ENCODE measurements at regions of chr2 and their contacts with region 1.

Region 1: GRCh38 chr2:20728114-20728758 is 61.3 kb downstream of the GDF7 start:
- DNase-seq: peak; percentile 93 to 94
- H3K4me3 ChIP-seq: no peak overlapping the region
- H3K4me3 Mint-ChIP-seq: peak overlapping the region; percentile 63
- H3K27ac Mint-ChIP-seq: peak overlapping the region; percentile 88
- H3K4me1 ChIP-seq: peaks cover 41% of the 10 kb centered on the region
- H3K4me1 Mint-ChIP-seq: peaks cover 18% of the 10 kb centered on the region
- H3K27me3 ChIP-seq: no peaks in the 10 kb centered on the region
- H3K27me3 Mint-ChIP-seq: no peaks in the 10 kb centered on the region
- CTCF ChIP-seq: no peak

Region 2: GRCh38 chr2:19879120-19879519 is 849.1 kb before region 1 on chr2:
- CTCF ChIA-PET with region 1: no interaction called
- POLR2A ChIA-PET with region 1: no interaction called
- intact Hi-C with region 1: no loop called
- DNase-seq: no peak
- H3K4me3 ChIP-seq: no peak overlapping the region
- H3K4me3 Mint-ChIP-seq: no peak overlapping the region
- H3K27ac Mint-ChIP-seq: no peak overlapping the region
- H3K4me1 ChIP-seq: no peaks in the 10 kb centered on the region
- H3K4me1 Mint-ChIP-seq: no peaks in the 10 kb centered on the region
- H3K27me3 ChIP-seq: no peaks in the 10 kb centered on the region; the same call in 1 of the 2 replicates
- H3K27me3 Mint-ChIP-seq: no peaks in the 10 kb centered on the region
- CTCF ChIP-seq: no peak

Region 3: DNA sequence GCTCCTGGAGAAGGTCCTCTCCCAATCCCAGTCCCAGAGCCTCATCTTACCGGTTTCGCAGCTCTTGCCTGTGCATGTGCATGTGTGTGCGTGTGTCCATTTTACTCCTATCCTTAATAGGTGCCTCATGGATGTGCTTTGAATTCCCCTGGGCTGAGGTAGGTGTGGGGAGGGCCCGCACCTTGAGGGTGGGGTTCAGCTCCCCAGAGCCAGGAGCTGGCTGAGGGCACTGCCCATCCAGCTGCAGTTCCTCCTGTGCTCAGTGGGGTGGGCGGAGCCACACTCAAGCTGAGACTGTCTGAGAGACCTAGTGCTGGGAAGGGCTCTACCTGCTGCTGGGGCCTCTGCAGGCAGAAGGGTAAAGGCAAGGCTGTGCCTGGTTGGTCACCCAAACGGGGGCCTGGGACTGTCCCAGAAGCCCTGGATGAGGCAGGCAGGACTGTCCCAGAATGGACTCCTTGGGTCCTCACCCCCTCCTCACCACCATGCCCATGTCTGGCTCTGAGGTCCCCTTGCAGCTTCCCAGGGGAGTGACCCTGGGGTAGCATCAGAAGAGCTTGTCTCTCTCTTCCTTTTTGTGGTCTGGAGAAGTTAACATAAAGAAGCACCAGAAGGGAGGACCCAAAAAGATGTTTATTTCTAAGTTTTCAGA is 52.4 kb before region 1 on chr2:
- CTCF ChIA-PET with region 1: interaction called, 6 read pairs
- POLR2A ChIA-PET with region 1: interaction called, 5 read pairs
- intact Hi-C with region 1: loop called (anchors 1 kb)
- DNase-seq: peak; percentile 79 to 80
- H3K4me3 ChIP-seq: no peak overlapping the region
- H3K4me3 Mint-ChIP-seq: peak overlapping the region; percentile 42
- H3K27ac Mint-ChIP-seq: peak overlapping the region; percentile 69
- H3K4me1 ChIP-seq: peaks cover 15% of the 10 kb centered on the region
- H3K4me1 Mint-ChIP-seq: peaks cover 25% of the 10 kb centered on the region
- H3K27me3 ChIP-seq: no peaks in the 10 kb centered on the region
- H3K27me3 Mint-ChIP-seq: no peaks in the 10 kb centered on the region
- CTCF ChIP-seq: peak in 1 of 2 experiments; percentile 32

Region 4: GRCh38 chr2:20682167-20682920 is 45.9 kb before region 1 on chr2:
- CTCF ChIA-PET with region 1: no interaction called
- POLR2A ChIA-PET with region 1: no interaction called
- intact Hi-C with region 1: loop called (anchors 1 kb)
- DNase-seq: peak in 1 of 2 experiments; percentile 58
- H3K4me3 ChIP-seq: no peak overlapping the region
- H3K4me3 Mint-ChIP-seq: no peak overlapping the region
- H3K27ac Mint-ChIP-seq: no peak overlapping the region
- H3K4me1 ChIP-seq: no peaks in the 10 kb centered on the region
- H3K4me1 Mint-ChIP-seq: no peaks in the 10 kb centered on the region
- H3K27me3 ChIP-seq: no peaks in the 10 kb centered on the region
- H3K27me3 Mint-ChIP-seq: no peaks in the 10 kb centered on the region
- CTCF ChIP-seq: peak; percentile 53 to 82

Region 5: GRCh38 chr2:20744366-20745335 is 16.4 kb after region 1 on chr2:
- CTCF ChIA-PET with region 1: interaction called, 5 read pairs
- POLR2A ChIA-PET with region 1: interaction called, 6 read pairs
- intact Hi-C with region 1: loop called (anchors 1 kb)
- DNase-seq: no peak
- H3K4me3 ChIP-seq: no peak overlapping the region
- H3K4me3 Mint-ChIP-seq: no peak overlapping the region
- H3K27ac Mint-ChIP-seq: no peak overlapping the region
- H3K4me1 ChIP-seq: peaks cover 34% of the 10 kb centered on the region
- H3K4me1 Mint-ChIP-seq: peaks cover 37% of the 10 kb centered on the region
- H3K27me3 ChIP-seq: no peaks in the 10 kb centered on the region
- H3K27me3 Mint-ChIP-seq: no peaks in the 10 kb centered on the region
- CTCF ChIP-seq: no peak

Region 6: DNA sequence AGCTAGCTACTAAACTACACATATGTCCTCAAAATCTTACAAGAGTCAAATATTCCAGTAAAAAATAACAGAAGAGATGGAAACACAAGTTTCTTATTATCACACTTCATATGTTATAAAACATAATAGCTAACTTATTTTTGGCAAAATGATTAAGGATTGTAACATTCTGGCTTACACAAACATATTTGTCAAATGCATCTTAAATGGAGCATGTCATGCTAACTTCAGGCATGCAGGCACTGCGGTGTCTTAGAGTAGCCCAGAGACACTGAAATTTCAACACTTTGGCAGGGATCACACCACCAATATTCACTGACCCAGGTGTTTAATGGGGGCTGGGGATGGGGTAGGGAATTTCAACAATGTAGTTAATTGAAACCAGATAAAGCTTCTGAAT is 43.1 kb after region 1 on chr2:
- CTCF ChIA-PET with region 1: no interaction called
- POLR2A ChIA-PET with region 1: no interaction called
- intact Hi-C with region 1: loop called (anchors 1 kb)
- DNase-seq: no peak
- H3K4me3 ChIP-seq: no peak overlapping the region
- H3K4me3 Mint-ChIP-seq: no peak overlapping the region
- H3K27ac Mint-ChIP-seq: no peak overlapping the region
- H3K4me1 ChIP-seq: peaks cover 23% of the 10 kb centered on the region
- H3K4me1 Mint-ChIP-seq: peaks cover 29% of the 10 kb centered on the region
- H3K27me3 ChIP-seq: no peaks in the 10 kb centered on the region
- H3K27me3 Mint-ChIP-seq: no peaks in the 10 kb centered on the region
- CTCF ChIP-seq: no peak

Region 7: GRCh38 chr2:20812779-20813178 is 84.5 kb after region 1 on chr2:
- CTCF ChIA-PET with region 1: no interaction called
- POLR2A ChIA-PET with region 1: no interaction called
- intact Hi-C with region 1: no loop called
- DNase-seq: no peak
- H3K4me3 ChIP-seq: no peak overlapping the region
- H3K4me3 Mint-ChIP-seq: no peak overlapping the region
- H3K27ac Mint-ChIP-seq: no peak overlapping the region
- H3K4me1 ChIP-seq: no peaks in the 10 kb centered on the region
- H3K4me1 Mint-ChIP-seq: no peaks in the 10 kb centered on the region
- H3K27me3 ChIP-seq: no peaks in the 10 kb centered on the region
- H3K27me3 Mint-ChIP-seq: no peaks in the 10 kb centered on the region
- CTCF ChIP-seq: no peak

Region 8: DNA sequence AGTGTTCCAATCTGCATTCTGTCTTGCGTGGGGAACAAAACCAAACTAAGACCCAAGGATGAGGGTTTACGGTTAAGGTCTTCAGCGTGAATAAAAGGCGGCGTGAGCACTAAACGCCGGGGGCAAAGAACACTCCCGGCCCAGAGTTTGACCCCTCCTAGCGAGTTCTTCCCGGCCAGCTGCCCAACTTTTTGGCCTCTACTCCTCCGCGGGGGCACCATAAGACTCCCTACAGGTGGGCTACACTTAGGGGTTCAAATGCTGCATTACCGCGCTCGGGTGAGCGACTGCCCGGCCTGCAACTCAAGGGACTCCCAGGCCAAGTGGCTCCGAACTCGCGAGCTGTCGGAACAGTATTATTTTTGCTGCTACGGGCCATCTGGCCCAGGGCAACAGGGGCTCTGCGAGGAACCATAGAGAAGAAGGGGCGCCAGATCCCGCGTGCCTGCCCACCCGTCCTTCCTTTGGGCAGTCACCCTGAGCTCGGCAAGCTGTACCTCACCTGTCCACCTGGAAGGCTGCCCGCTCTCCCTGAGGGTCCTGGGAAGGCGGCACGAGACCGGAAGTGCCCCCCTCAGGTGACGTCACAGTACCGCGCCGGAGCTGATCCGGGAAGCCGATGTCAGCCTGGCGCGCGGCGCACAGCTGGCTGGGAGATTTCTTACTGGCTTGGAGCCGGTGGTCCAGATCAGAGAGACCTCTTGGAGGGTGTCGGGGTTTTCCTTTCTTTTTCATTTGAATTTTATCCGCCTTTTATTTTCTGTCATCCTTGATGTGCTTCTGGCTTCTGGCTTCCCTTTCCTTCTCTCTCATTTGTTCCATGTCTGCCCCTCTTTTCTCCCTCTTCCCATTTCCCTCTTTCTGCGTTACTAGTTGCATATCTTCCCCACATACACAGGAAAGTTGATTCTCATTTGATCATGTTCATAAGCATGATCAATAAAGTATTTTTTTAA is 94.6 kb after region 1 on chr2 and contains the start of gene LDAH:
- CTCF ChIA-PET with region 1: no interaction called
- POLR2A ChIA-PET with region 1: no interaction called
- intact Hi-C with region 1: loop called (anchors 1 kb)
- DNase-seq: peak; percentile 94 to 95
- H3K4me3 ChIP-seq: peak within 1 kb of the TSS; percentile 83
- H3K4me3 Mint-ChIP-seq: peak within 1 kb of the TSS; percentile 98
- H3K27ac Mint-ChIP-seq: peak within 1 kb of the TSS; percentile 99
- H3K4me1 ChIP-seq: peaks cover 13% of the 10 kb centered on the region
- H3K4me1 Mint-ChIP-seq: peaks cover 5% of the 10 kb centered on the region
- H3K27me3 ChIP-seq: no peaks in the 10 kb centered on the region
- H3K27me3 Mint-ChIP-seq: no peaks in the 10 kb centered on the region
- CTCF ChIP-seq: no peak
- total RNA-seq, gene LDAH: 37.2 and 40.5 TPM in 2 replicates

Region 9: GRCh38 chr2:20897047-20897446 is 168.8 kb after region 1 on chr2:
- CTCF ChIA-PET with region 1: no interaction called
- POLR2A ChIA-PET with region 1: no interaction called
- intact Hi-C with region 1: no loop called
- DNase-seq: no peak
- H3K4me3 ChIP-seq: no peak overlapping the region
- H3K4me3 Mint-ChIP-seq: no peak overlapping the region
- H3K27ac Mint-ChIP-seq: no peak overlapping the region
- H3K4me1 ChIP-seq: no peaks in the 10 kb centered on the region
- H3K4me1 Mint-ChIP-seq: no peaks in the 10 kb centered on the region
- H3K27me3 ChIP-seq: no peaks in the 10 kb centered on the region; the same call in 1 of the 2 replicates
- H3K27me3 Mint-ChIP-seq: peaks cover 19% of the 10 kb centered on the region
- CTCF ChIP-seq: no peak

Region 10: DNA sequence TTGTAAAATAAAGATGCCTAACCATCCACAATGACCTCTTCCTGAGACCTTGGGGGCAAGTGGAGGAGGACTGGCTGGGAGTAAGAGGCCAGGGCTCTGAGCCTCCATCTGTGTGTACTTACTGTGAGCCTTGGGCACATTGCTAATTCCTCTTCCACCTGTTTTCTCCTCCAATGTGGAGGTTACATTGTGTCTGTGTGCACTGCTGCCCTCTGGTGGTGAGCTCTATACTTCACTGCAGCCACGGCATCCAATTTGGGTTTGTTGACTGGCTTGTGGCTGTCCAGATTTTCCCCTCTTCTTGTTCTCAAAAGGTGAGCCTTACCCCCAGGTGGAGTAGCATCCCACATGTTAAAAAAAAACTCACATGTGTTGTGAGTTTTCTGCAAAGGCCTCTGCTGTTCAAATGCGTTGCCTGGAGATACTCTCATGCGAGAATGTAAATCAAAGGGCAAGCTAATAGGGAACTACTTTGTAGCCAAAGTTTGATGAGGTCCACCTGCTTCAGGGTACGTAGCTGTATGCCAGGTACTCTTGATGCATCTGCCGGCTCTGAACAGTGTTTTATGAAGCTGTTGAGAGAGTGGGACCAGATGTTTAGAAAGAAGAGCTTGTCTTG is 234.8 kb after region 1 on chr2:
- CTCF ChIA-PET with region 1: interaction called, 4 read pairs
- POLR2A ChIA-PET with region 1: no interaction called
- intact Hi-C with region 1: loop called (anchors 2 kb)
- DNase-seq: peak; percentile 73 to 80
- H3K4me3 ChIP-seq: no peak overlapping the region
- H3K4me3 Mint-ChIP-seq: no peak overlapping the region
- H3K27ac Mint-ChIP-seq: no peak overlapping the region
- H3K4me1 ChIP-seq: no peaks in the 10 kb centered on the region
- H3K4me1 Mint-ChIP-seq: no peaks in the 10 kb centered on the region
- H3K27me3 ChIP-seq: no peaks in the 10 kb centered on the region; the same call in 1 of the 2 replicates
- H3K27me3 Mint-ChIP-seq: peaks cover 5% of the 10 kb centered on the region
- CTCF ChIP-seq: peak; percentile 83 to 90

Region 11: GRCh38 chr2:21103274-21103891 is 375.1 kb after region 1 on chr2:
- CTCF ChIA-PET with region 1: no interaction called
- POLR2A ChIA-PET with region 1: no interaction called
- intact Hi-C with region 1: no loop called
- DNase-seq: no peak
- H3K4me3 ChIP-seq: no peak overlapping the region
- H3K4me3 Mint-ChIP-seq: no peak overlapping the region
- H3K27ac Mint-ChIP-seq: no peak overlapping the region
- H3K4me1 ChIP-seq: no peaks in the 10 kb centered on the region
- H3K4me1 Mint-ChIP-seq: peaks cover 7% of the 10 kb centered on the region
- H3K27me3 ChIP-seq: no peaks in the 10 kb centered on the region
- H3K27me3 Mint-ChIP-seq: no peaks in the 10 kb centered on the region
- CTCF ChIP-seq: no peak